ENCODE measurements at regions of chr7 and their contacts with region 1.

Region 1: GRCh38 chr7:21656796-21657195 is 114.0 kb downstream of the DNAH11 start:
- DNase-seq: no peak
- H3K4me3 ChIP-seq: no peak overlapping the region
- H3K27ac ChIP-seq: no peak overlapping the region
- H3K4me1 ChIP-seq: no peaks in the 10 kb centered on the region
- H3K27me3 ChIP-seq: no peaks in the 10 kb centered on the region
- CTCF ChIP-seq: no peak
- POLR2A ChIP-seq: no peak

Region 2: GRCh38 chr7:21538938-21539495 is 117.8 kb before region 1 on chr7:
- intact Hi-C with region 1: no loop called
- DNase-seq: no peak
- H3K4me3 ChIP-seq: no peak overlapping the region
- H3K27ac ChIP-seq: no peak overlapping the region
- H3K4me1 ChIP-seq: no peaks in the 10 kb centered on the region
- H3K27me3 ChIP-seq: peaks cover 0 to 17% of the 10 kb centered on the region in 2 donors
- CTCF ChIP-seq: no peak
- POLR2A ChIP-seq: no peak

Region 3: DNA sequence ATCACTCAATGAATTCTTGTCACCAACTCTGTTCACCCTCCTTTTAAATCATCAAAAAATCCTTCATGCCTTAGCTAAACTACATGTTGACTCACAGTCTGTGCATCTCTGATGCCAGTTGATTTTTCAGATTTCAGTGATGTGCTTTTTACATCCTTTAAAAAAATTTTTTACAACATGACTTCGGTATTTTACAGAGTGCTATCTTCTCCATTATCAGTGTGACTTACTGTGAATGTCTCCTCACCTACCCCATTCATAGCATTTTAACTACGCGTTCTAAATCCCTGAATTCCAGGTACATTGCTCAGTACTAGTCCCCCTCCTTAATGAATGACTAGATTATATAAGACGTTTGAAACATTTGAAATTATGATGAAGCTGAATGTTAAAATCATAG is 15.2 kb before region 1 on chr7:
- intact Hi-C with region 1: loop called (anchors 1 kb)
- DNase-seq: no peak
- H3K4me3 ChIP-seq: no peak overlapping the region
- H3K27ac ChIP-seq: no peak overlapping the region
- H3K4me1 ChIP-seq: no peaks in the 10 kb centered on the region
- H3K27me3 ChIP-seq: no peaks in the 10 kb centered on the region
- CTCF ChIP-seq: no peak
- POLR2A ChIP-seq: no peak

Region 4: DNA sequence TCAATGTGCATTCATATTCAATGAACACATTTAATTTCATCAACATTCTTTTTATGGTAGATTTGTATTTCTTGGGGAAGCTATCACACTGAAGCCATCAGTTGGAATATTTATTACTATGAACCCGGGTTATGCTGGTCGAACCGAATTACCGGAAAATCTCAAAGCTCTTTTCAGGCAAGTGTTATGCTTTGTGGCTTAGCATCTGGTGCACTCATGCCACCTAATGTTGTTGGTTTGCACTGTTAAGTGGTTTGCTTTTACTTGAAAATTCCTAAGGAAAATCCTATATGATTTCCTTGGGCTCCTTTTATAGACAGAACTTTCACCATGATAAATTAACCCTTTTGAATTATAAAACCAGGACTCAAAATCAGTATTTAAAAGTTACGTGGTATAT is 33.9 kb after region 1 on chr7:
- intact Hi-C with region 1: loop called (anchors 2 kb)
- DNase-seq: no peak
- H3K4me3 ChIP-seq: no peak overlapping the region
- H3K27ac ChIP-seq: no peak overlapping the region
- H3K4me1 ChIP-seq: no peaks in the 10 kb centered on the region
- H3K27me3 ChIP-seq: no peaks in the 10 kb centered on the region
- CTCF ChIP-seq: no peak
- POLR2A ChIP-seq: no peak

Region 5: DNA sequence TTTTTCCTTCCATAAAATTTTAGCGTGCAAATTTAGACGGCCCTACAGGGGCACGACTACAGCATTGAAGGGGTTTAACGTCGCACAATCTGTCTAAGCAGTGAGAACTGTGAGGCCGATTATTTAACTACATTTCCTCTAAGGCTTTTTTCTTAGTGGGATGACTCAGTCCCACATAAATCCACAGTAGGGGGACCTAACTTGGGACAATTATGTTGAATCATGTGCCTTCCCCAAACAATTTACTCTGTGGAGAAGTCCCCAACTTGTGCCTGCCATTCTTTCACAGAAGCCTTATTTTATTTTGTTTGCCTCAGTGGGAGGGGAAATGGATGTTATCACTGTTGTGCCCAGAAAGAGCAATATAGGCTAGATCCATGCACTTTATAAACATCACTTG is 369.2 kb after region 1 on chr7:
- intact Hi-C with region 1: loop called (anchors 5 kb)
- DNase-seq: no peak
- H3K4me3 ChIP-seq: no peak overlapping the region
- H3K27ac ChIP-seq: no peak overlapping the region
- H3K4me1 ChIP-seq: no peaks in the 10 kb centered on the region
- H3K27me3 ChIP-seq: no peaks in the 10 kb centered on the region
- CTCF ChIP-seq: no peak
- POLR2A ChIP-seq: no peak